Activated CD4-positive, alpha-beta T cell treated with anti-CD3 and anti-CD28 coated beads, Interleukin-2, amount 10 ng/mL, durations not matched to agents 24 days and 14 days (primary cell): ENCODE measurements at regions of chr19 and their contacts with region 1.

Region 1: GRCh38 chr19:54882758-54883157 is 8.7 kb downstream of the FCAR start:
- DNase-seq: peak; percentile 73
- H3K4me3 Mint-ChIP-seq: peak overlapping the region; percentile 39
- H3K27ac Mint-ChIP-seq: no peak overlapping the region
- H3K4me1 Mint-ChIP-seq: peaks cover 7% of the 10 kb centered on the region
- H3K27me3 Mint-ChIP-seq: peaks cover 15% of the 10 kb centered on the region

Region 2: DNA sequence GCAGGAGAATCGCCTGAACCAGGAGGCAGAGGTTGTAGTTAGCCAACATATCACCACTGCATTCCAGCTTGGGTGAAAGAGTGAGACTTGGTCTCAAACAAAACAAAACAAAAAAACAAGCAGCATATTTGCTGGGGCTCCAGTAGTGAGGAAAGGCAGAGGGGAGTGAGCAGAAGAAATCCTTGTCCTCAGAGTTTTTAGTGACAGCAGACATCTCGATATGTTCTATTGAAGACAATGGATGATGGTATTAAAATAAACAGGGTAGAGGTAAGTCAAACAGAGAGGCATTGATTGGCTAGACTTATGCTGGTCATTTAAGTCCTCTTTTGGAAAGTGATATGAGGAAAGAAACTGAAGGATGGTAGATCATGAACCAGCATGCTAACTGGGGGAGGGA is 45.5 kb after region 1 on chr19:
- intact Hi-C with region 1: no loop called
- DNase-seq: no peak
- H3K4me3 Mint-ChIP-seq: no peak overlapping the region
- H3K27ac Mint-ChIP-seq: no peak overlapping the region
- H3K4me1 Mint-ChIP-seq: no peaks in the 10 kb centered on the region
- H3K27me3 Mint-ChIP-seq: no peaks in the 10 kb centered on the region

Region 3: DNA sequence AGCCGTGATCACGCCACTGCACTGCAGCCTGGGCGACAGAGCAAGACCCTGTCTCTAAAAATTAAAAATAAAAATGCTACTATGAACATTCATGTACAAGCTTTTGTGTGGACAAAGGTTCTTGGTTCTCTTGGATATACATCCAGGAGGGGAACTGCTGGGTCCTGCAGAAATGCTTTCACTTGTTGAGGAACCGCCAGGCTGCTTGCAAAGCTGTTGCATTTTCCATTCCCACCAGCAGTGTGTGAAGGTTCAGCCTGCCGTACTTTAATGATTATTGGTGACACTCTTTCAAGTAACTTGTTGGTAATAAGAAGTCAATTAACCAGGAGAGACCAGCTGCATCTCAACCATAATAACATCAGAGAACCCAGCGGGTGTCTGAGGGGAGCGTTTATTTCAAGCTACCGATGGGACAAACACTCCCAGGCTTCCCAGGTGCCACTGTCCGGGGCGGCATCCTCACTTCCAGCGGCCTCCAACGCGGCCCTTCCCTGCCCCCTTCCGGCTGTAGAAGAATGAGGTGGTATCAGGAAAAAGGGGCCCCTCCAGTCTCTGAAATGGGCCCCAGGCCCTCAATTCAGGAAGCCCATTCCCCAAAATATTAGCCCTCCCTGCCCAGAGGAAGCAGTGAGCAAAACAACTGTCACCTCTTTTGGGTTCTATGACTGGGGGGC is 249.8 kb after region 1 on chr19:
- intact Hi-C with region 1: loop called (anchors 10 kb)
- DNase-seq: no peak
- H3K4me3 Mint-ChIP-seq: no peak overlapping the region
- H3K27ac Mint-ChIP-seq: no peak overlapping the region
- H3K4me1 Mint-ChIP-seq: no peaks in the 10 kb centered on the region
- H3K27me3 Mint-ChIP-seq: peaks cover 18% of the 10 kb centered on the region